HCT116 (cell line): ENCODE measurements at regions of chr19 and their contacts with region 1.

Region 1: DNA sequence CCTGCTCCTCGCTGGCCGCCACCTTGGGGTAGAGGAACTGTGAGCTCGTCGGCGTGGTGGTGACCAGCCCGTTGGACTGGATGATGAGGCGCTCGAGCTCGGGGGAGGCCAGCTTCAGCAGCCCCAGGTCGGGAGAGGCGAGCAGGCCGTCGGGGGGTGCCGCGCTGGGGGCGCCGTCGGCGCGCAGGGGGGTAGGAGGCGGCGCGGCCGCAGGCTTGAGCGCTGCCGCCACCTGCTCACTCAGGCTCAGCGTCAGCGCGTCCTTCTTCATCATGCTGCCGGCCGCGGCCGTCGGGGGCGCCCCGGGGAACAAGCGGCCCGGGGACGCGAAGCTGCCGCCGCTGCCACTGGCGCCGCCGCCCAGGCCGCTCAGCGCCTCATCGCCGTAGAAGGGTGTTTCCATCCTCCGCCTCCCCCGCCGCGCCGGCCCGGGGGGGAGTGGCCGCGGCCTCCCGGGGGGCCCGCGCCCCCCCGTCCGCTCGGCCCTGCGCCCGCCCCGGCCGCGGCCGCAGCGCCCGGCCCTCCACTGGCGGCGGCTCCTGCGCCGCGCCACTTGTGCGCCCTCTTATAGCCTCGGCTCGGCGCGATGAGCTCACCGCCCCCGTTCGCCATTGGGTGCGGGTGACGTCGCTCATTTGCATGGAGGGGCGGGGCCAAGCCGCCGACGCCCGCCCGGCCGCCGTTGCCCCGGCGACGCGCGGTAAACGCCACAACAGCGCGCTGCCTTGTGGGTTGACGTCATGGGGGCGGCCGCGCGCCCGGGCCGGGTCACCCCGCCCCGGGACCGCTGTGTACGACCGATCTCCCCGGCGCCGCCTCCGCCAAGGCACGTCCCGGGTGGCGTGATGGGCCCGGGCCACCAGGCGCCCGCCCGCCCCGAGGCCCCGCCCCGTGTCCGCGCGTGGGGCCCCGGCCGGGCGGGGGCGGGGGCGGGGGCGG is at the start of gene JUND:
- DNase-seq: peak; percentile 93
- ATAC-seq: peak; percentile 76
- H3K4me3 ChIP-seq: peak within 1 kb of the TSS; percentile 76 to 89
- H3K27ac ChIP-seq: peak within 1 kb of the TSS; percentile 100
- H3K4me1 ChIP-seq: peaks cover 43 to 56% of the 10 kb centered on the region in 2 experiments
- H3K27me3 ChIP-seq: no peaks in the 10 kb centered on the region
- CTCF ChIP-seq: no peak
- POLR2A ChIP-seq: peak; percentile 98
- RAD21 ChIP-seq: no peak
- total RNA-seq, gene JUND: 221 TPM

Region 2: GRCh38 chr19:18224525-18225354 is 56.6 kb before region 1 on chr19:
- CTCF ChIA-PET with region 1: interaction called, 8 read pairs
- POLR2A ChIA-PET with region 1: interaction called, 19 read pairs
- RAD21 ChIA-PET with region 1: no interaction called
- intact Hi-C with region 1: no loop called
- DNase-seq: peak; percentile 99
- ATAC-seq: peak; percentile 98
- H3K4me3 ChIP-seq: peak overlapping the region; percentile 45 to 56
- H3K27ac ChIP-seq: peak overlapping the region; percentile 72
- H3K4me1 ChIP-seq: peaks cover 18 to 30% of the 10 kb centered on the region in 2 experiments
- H3K27me3 ChIP-seq: no peaks in the 10 kb centered on the region
- CTCF ChIP-seq: no peak
- POLR2A ChIP-seq: no peak
- RAD21 ChIP-seq: no peak

Region 3: DNA sequence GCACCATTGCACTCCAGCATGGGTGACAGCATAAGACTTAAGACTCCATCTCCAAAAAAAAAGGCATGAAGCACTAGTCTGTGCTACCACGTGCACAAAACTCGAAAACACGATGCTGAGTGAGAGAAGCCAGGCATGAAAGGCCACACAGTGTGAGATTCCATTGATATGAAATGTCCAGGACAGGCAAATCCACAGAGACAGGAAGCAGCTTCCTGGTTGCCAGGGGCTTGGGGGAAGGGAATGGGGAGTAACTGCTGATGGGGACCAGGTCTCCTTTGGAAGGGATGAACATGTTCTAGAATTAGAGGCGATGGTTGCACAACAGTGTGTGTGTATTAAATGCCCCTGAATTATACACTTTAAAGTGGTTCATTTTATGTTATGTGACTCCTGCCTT is 16.0 kb after region 1 on chr19:
- CTCF ChIA-PET with region 1: interaction called, 28 read pairs
- POLR2A ChIA-PET with region 1: interaction called, 138 read pairs
- RAD21 ChIA-PET with region 1: interaction called, 5 to 6 read pairs
- intact Hi-C with region 1: no loop called
- DNase-seq: no peak
- ATAC-seq: no peak
- H3K4me3 ChIP-seq: no peak overlapping the region
- H3K27ac ChIP-seq: no peak overlapping the region
- H3K4me1 ChIP-seq: peaks cover 42 to 70% of the 10 kb centered on the region in 2 experiments
- H3K27me3 ChIP-seq: no peaks in the 10 kb centered on the region
- CTCF ChIP-seq: no peak
- POLR2A ChIP-seq: no peak
- RAD21 ChIP-seq: no peak

Region 4: GRCh38 chr19:18328340-18329034 is 47.1 kb after region 1 on chr19:
- CTCF ChIA-PET with region 1: interaction called, 76 read pairs
- POLR2A ChIA-PET with region 1: interaction called, 36 read pairs
- RAD21 ChIA-PET with region 1: interaction called, 3 to 8 read pairs
- intact Hi-C with region 1: loop called (anchors 1 kb)
- DNase-seq: peak; percentile 94
- ATAC-seq: peak; percentile 99
- H3K4me3 ChIP-seq: peak overlapping the region; percentile 45 to 46
- H3K27ac ChIP-seq: peak overlapping the region; percentile 45
- H3K4me1 ChIP-seq: peaks cover 21 to 35% of the 10 kb centered on the region in 2 experiments
- H3K27me3 ChIP-seq: no peaks in the 10 kb centered on the region
- CTCF ChIP-seq: peak; percentile 90 to 97 (median 93); a peak in 5 of 6 replicates
- POLR2A ChIP-seq: peak; percentile 72
- RAD21 ChIP-seq: peak; percentile 91

Region 5: DNA sequence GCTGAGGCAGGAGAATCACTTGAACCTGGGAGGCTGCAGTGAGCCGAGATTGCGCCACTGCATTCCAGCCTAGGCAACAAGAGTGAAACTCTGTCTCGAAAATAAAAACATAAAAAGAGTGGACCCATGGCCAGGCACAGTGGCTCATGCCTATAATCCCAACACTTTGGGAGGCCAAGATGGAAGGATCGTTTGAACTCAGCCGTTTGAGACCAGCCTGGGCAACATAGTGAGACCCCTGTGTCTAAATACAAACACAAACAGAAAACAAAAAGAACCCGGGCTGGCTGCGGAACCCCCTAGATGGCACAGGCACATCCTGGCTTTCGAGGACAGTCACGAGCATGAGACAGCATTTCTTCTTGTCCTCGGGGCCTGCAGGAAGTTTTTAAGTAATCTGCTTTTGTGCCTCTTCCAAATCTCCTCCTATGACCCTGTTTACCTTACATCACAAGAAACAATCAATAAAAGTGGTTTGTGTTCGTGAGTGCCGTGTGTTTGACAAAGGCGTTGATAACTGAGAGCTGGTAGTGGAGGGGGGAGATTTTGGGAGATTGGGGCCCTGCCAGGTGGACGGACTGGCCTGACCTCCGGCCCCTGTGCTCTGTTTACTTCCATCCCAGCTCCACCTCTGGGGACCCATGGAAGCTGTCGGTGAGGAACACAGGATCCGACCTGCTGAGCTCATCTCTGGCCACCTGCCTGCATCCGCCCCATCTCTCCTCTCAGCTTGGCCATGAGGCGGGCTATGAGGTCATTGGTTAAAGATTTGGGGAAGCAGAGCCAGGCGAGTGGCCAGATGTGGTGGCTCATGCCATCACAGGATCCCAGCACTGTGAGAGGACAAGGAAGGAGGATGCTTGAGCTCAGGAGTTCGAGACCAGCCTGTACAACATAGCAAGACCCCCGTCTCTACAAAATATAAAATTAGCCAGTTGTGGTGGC is 98.7 kb after region 1 on chr19:
- CTCF ChIA-PET with region 1: interaction called, 4 read pairs
- POLR2A ChIA-PET with region 1: interaction called, 26 read pairs
- RAD21 ChIA-PET with region 1: no interaction called
- intact Hi-C with region 1: no loop called
- DNase-seq: peak; percentile 93
- ATAC-seq: peak; percentile 84
- H3K4me3 ChIP-seq: peak overlapping the region in 1 of 2 experiments; percentile 7; a peak in 1 of 4 replicates
- H3K27ac ChIP-seq: peak overlapping the region; percentile 83
- H3K4me1 ChIP-seq: peaks cover 90% of the 10 kb centered on the region in 2 experiments
- H3K27me3 ChIP-seq: no peaks in the 10 kb centered on the region
- CTCF ChIP-seq: no peak
- POLR2A ChIP-seq: no peak
- RAD21 ChIP-seq: no peak

Region 6: GRCh38 chr19:18419195-18419698 is 137.9 kb after region 1 on chr19 and contains the start of gene SSBP4:
- CTCF ChIA-PET with region 1: interaction called, 16 read pairs
- POLR2A ChIA-PET with region 1: interaction called, 45 read pairs
- RAD21 ChIA-PET with region 1: no interaction called
- intact Hi-C with region 1: no loop called
- DNase-seq: no peak
- ATAC-seq: peak; percentile 12
- H3K4me3 ChIP-seq: peak within 1 kb of the TSS; percentile 65 to 92
- H3K27ac ChIP-seq: peak within 1 kb of the TSS; percentile 98
- H3K4me1 ChIP-seq: peaks cover 50 to 80% of the 10 kb centered on the region in 2 experiments
- H3K27me3 ChIP-seq: no peaks in the 10 kb centered on the region
- CTCF ChIP-seq: peak in 1 of 3 experiments; percentile 17; a peak in 1 of 6 replicates
- POLR2A ChIP-seq: no peak
- RAD21 ChIP-seq: no peak
- total RNA-seq, gene SSBP4: 164 TPM

Region 7: DNA sequence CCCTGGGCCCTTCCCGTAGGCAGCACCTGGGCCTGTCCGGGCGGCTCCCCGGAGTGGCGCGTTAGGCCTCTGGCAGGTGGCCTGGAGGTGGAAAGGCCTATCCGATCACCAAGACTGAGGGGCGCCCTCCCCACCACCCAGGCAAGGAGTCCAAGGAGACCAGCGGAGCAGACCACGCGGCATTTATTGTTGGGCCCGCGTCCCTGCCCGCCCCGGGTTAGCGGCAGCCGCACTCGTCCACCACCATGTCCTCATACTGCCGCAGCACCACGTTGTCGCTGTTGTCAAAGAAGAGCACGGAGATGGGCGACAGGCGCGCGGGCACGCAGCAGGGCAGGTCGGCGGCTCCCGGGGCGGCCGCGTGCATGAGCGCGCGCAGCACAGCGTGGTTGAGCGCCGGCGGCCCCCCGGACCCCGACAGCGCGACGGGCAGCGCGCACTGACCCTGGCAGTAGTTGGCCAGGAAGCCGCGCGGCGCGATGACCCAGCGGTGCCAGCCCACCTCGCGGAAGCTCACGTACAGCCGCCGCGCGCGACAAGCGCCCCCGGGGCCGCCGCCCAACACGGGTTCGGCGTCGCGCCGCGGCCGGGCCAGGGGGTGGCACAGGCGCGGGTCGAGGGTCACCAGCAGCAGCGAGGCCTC is 587.1 kb after region 1 on chr19:
- CTCF ChIA-PET with region 1: no interaction called
- POLR2A ChIA-PET with region 1: no interaction called
- RAD21 ChIA-PET with region 1: no interaction called
- intact Hi-C with region 1: no loop called
- DNase-seq: no peak
- ATAC-seq: no peak
- H3K4me3 ChIP-seq: no peak overlapping the region
- H3K27ac ChIP-seq: peak overlapping the region; percentile 17
- H3K4me1 ChIP-seq: 0 out of 4 replicates have a peak, but pooled peaks cover 0 to 2% of the 10 kb centered on the region in 2 experiments
- H3K27me3 ChIP-seq: no peaks in the 10 kb centered on the region
- CTCF ChIP-seq: no peak
- POLR2A ChIP-seq: no peak
- RAD21 ChIP-seq: no peak